Sigmoid colon (tissue), 7 donors: ENCODE measurements at regions of chr4 and their contacts with region 1.

Region 1: DNA sequence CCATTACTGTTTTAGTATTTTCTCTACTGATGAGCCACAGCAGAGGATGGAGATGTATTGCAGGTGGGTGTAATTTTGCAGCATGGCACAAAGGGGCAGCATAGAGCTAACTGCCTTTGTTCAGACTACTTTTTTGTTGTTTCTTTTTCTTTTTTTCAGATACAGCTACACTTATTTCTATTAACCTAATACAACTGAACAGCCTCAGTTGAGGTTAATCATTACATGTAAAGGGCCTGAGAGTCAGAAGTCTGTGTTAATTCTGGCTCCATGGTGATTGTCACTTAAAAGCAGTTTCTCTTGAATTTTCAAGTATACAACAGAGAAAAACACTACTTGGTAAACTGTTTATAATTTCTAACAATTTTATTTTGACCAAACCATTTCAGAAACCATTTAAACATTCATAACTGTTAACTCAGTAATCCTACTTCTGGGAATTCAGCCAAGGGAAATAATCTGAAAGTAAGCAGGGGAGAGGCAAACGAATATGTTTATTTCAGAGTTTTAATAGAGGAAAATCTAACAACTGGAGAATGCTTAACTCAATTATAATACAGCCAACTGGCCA is 13.9 kb upstream of the PPEF2 start:
- DNase-seq: no peak
- H3K4me3 ChIP-seq: no peak overlapping the region
- H3K27ac ChIP-seq: peak overlapping the region; percentile 27 to 58 (median 52)
- H3K4me1 ChIP-seq: peaks cover 0 to 12% (median 4%) of the 10 kb centered on the region in 4 donors
- H3K27me3 ChIP-seq: no peaks in the 10 kb centered on the region
- CTCF ChIP-seq: peak; percentile 32 to 81 (median 76)
- EP300 ChIP-seq: no peak
- POLR2A ChIP-seq: no peak

Region 2: DNA sequence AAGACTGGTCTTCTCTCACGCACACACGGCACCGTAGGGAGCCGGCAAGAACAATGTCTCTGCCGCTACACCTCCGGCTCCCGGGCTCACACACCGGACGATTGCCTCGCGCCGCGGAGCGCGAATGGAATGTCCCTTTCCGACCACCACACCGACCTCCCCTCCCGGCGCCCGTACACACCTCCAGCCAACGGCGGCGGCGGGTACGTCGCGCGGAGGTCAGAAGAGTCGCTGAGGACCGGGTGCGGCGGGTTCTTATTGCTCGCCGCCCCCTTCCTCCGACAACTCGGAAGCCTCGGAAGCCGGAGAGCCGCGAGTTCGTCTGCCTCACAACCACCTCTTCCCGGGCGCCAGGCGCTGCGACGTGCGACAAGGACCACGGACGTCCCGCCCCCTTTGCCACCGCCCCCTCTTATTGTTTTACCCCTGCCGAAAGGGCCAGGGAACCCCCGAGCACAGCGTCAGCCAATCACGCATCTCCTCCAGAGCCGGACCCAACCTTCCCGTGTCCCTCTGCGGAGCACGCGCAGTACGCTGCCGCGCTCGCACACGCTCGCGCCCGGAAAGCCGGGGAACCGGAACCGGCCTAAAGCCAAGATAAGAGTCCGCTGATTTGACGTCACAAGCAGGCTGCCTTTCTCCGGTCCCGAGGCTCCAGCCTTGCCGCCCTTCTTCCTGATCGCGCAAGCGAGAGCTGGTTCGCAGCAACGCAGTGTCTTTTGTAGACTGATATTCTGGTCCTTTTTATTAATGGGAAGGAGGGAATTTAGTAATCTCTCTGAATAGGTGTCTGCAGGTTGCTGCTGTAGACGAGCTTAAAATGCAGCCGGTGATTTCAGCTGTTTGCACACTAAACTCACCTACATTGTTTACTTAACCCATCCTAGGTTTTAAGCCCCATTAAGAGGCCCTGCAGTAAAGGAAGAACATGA is 242.9 kb before region 1 on chr4 and contains the start of gene G3BP2:
- intact Hi-C with region 1: no loop called
- DNase-seq: peak; percentile 99
- H3K4me3 ChIP-seq: peak within 1 kb of the TSS; percentile 85 to 98 (median 92)
- H3K27ac ChIP-seq: peak within 1 kb of the TSS; percentile 97 to 99 (median 98)
- H3K4me1 ChIP-seq: peaks cover 0 to 41% (median 35%) of the 10 kb centered on the region in 4 donors
- H3K27me3 ChIP-seq: no peaks in the 10 kb centered on the region
- CTCF ChIP-seq: no peak
- EP300 ChIP-seq: peak in 2 of 4 donors; percentile 40 to 41
- POLR2A ChIP-seq: peak; percentile 85 to 90
- total RNA-seq, gene G3BP2: 102 to 141 (median 119) TPM

Region 3: DNA sequence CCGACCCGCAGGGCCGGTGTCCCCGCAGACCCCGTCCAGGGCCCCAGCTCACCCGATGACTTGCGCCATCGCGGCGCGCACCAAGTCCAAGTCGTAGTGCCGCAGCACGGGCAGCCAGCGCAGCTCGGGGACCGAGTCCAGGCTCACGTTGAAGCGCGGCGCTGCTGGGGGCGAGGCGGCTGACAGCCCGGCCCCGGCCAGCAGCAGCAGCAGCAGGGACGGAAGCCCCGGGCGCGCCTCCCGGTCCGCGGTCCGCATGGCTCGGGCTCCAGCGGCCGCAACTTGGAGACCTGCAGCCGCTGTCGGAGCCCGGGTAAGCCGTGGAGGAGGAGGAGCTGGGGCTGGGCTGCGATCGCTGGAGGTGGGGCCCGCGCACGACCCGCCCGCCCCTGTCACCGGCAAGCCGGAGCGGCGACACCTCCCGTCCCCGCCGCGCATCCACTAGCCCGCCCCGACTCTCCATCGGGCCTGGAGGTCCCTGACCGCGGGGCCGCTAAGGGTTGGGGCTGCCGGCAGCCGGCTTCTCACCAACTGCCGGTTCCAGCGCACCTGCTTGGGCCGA is 24.6 kb after region 1 on chr4 and contains the start of gene NAAA:
- intact Hi-C with region 1: loop called (anchors 2 kb)
- DNase-seq: peak; percentile 92
- H3K4me3 ChIP-seq: peak within 1 kb of the TSS; percentile 61 to 79 (median 69)
- H3K27ac ChIP-seq: peak within 1 kb of the TSS; percentile 69 to 84 (median 74)
- H3K4me1 ChIP-seq: peaks cover 0 to 4% (median 0%) of the 10 kb centered on the region in 4 donors
- H3K27me3 ChIP-seq: no peaks in the 10 kb centered on the region
- CTCF ChIP-seq: peak in 2 of 4 experiments; percentile 42 to 49
- EP300 ChIP-seq: no peak
- POLR2A ChIP-seq: peak in 1 of 2 donors; percentile 10
- total RNA-seq, gene NAAA: 23.3 to 60.6 (median 34.1) TPM